CD4-positive, alpha-beta memory T cell (primary cell): ENCODE measurements at regions of chr14 and their contacts with region 1.

Region 1: GRCh38 chr14:64636208-64636979 is 67.8 kb upstream of the PLEKHG3 start:
- DNase-seq: peak; percentile 55 to 73 (median 63)
- H3K4me3 ChIP-seq: no peak overlapping the region
- H3K4me3 Mint-ChIP-seq: no peak overlapping the region
- H3K27ac ChIP-seq: no peak overlapping the region
- H3K27ac Mint-ChIP-seq: peak overlapping the region in 2 of 7 donors; percentile 8 to 17
- H3K4me1 ChIP-seq: no peaks in the 10 kb centered on the region
- H3K4me1 Mint-ChIP-seq: peaks cover 0 to 5% (median 4%) of the 10 kb centered on the region in 4 donors
- H3K27me3 ChIP-seq: no peaks in the 10 kb centered on the region
- H3K27me3 Mint-ChIP-seq: peaks cover 1 to 5% of the 10 kb centered on the region in 2 donors

Region 2: DNA sequence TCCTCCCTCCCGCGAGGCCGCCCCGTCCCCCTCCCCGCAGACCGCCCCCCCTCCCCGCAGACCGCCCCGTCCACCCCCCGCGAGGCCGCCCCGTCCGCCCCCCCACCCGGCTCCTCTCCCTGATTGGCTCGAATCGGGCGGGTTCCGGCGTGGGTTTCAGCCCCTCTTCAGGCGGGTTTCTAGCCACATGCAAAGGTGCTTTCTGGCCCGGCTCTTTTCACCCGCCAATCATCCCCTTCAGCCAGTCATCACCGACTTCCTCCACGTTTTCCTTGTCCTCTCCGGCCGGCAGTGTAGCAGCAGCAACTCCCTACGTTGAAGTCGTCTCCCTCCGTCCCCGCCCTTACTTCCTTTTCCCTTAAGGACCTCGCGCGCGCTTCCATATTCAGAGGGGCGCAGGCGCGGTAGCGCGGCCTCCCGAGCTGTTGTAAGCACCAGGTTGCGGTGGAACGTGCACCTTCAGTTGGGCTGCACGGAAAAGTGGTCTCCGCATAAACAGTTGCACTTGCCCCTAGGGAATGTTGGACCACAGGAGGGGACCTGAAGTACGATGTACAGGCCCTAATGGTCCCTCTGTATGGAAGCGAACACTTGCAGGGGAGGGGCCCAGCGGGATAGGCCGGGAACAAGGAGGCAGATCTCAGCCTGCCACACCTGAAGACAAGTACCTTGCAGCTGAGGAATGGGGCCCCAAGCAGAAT is 297.6 kb before region 1 on chr14:
- CTCF ChIA-PET with region 1: interaction called, 33 read pairs
- POLR2A ChIA-PET with region 1: interaction called, 3 read pairs
- intact Hi-C with region 1: no loop called
- DNase-seq: peak; percentile 84 to 91 (median 85)
- H3K4me3 ChIP-seq: peak overlapping the region; percentile 36 to 77
- H3K4me3 Mint-ChIP-seq: peak overlapping the region; percentile 93 to 99 (median 95)
- H3K27ac ChIP-seq: peak overlapping the region; percentile 34
- H3K27ac Mint-ChIP-seq: peak overlapping the region; percentile 83 to 97 (median 95)
- H3K4me1 ChIP-seq: peaks cover 17% of the 10 kb centered on the region
- H3K4me1 Mint-ChIP-seq: peaks cover 12 to 27% (median 21%) of the 10 kb centered on the region in 4 donors
- H3K27me3 ChIP-seq: no peaks in the 10 kb centered on the region
- H3K27me3 Mint-ChIP-seq: no peaks in the 10 kb centered on the region

Region 3: DNA sequence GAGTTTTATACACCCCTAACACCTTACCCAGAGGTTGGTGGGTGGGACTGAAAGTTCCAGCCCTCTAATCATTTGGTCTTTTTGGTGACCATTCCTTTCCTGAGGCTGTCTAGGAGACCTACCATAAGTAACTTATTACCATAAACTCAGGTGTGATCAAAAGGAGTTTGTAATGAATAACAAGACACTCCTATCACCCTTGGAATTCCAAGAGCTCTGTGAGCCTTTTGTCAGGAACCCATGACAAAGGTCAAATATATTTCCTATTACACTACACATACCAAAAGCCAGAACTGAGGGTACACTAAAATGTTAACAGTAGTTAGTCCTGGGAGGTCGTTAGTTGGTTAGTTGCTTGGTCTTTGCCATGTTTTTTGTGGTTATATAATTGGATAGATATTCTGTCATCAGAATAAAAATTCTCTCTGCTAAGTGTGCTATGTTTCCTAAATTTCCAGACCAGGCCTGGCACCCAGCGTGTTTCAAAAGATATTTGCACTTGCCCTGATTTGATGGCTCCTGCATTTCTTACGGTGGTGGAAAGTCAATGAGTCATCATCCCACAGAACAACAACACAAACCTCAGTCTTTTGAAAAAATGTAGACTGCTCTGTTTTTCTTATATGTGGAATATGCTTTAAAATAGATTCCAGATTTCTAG is 198.1 kb before region 1 on chr14:
- CTCF ChIA-PET with region 1: interaction called, 46 read pairs
- POLR2A ChIA-PET with region 1: no interaction called
- intact Hi-C with region 1: no loop called
- DNase-seq: no peak
- H3K4me3 ChIP-seq: no peak overlapping the region
- H3K4me3 Mint-ChIP-seq: no peak overlapping the region
- H3K27ac ChIP-seq: no peak overlapping the region
- H3K27ac Mint-ChIP-seq: peak overlapping the region in 1 of 7 donors; percentile 50
- H3K4me1 ChIP-seq: no peaks in the 10 kb centered on the region
- H3K4me1 Mint-ChIP-seq: peaks cover 7 to 14% (median 12%) of the 10 kb centered on the region in 4 donors
- H3K27me3 ChIP-seq: no peaks in the 10 kb centered on the region
- H3K27me3 Mint-ChIP-seq: no peaks in the 10 kb centered on the region

Region 4: GRCh38 chr14:64540208-64541157 is 95.9 kb before region 1 on chr14 and contains the start of gene HSPA2:
- CTCF ChIA-PET with region 1: interaction called, 40 read pairs
- POLR2A ChIA-PET with region 1: interaction called, 5 read pairs
- intact Hi-C with region 1: loop called (anchors 1 kb)
- DNase-seq: peak; percentile 92 to 94 (median 94)
- H3K4me3 ChIP-seq: peak within 1 kb of the TSS; percentile 65 to 86
- H3K4me3 Mint-ChIP-seq: peak within 1 kb of the TSS; percentile 92 to 99 (median 96)
- H3K27ac ChIP-seq: peak within 1 kb of the TSS; percentile 43
- H3K27ac Mint-ChIP-seq: peak within 1 kb of the TSS; percentile 86 to 98 (median 90)
- H3K4me1 ChIP-seq: peaks cover 24% of the 10 kb centered on the region
- H3K4me1 Mint-ChIP-seq: peaks cover 12 to 39% (median 29%) of the 10 kb centered on the region in 4 donors
- H3K27me3 ChIP-seq: no peaks in the 10 kb centered on the region
- H3K27me3 Mint-ChIP-seq: peaks cover 0 to 3% of the 10 kb centered on the region in 2 donors
- total RNA-seq, gene HSPA2: 1.3 to 1.5 TPM

Region 5: DNA sequence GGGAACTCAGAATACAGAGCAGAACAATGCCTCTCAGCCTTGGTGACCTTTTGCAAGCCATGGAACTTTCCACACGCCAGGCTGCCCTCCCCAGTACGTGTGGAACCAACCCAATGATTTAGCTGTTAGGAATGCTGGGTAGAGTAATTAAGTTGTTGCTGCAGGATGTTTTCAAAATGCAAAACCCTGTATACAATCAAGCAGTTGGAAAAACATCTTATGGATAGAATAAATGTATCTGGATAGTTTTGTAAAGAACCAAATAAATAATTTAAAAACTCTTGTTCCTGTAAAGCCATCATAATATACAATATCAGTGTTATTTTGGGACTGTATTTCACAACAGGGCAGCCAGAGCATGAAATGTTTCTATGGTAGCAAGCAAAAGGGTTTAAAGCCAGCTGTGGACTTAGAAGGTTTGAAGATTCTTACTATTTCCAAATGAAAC is 67.2 kb before region 1 on chr14:
- CTCF ChIA-PET with region 1: no interaction called
- POLR2A ChIA-PET with region 1: no interaction called
- intact Hi-C with region 1: no loop called
- DNase-seq: no peak
- H3K4me3 ChIP-seq: no peak overlapping the region
- H3K4me3 Mint-ChIP-seq: no peak overlapping the region
- H3K27ac ChIP-seq: no peak overlapping the region
- H3K27ac Mint-ChIP-seq: no peak overlapping the region
- H3K4me1 ChIP-seq: no peaks in the 10 kb centered on the region
- H3K4me1 Mint-ChIP-seq: no peaks in the 10 kb centered on the region
- H3K27me3 ChIP-seq: no peaks in the 10 kb centered on the region
- H3K27me3 Mint-ChIP-seq: peaks cover 0 to 3% of the 10 kb centered on the region in 2 donors

Region 6: GRCh38 chr14:64625475-64626269 is 10.7 kb before region 1 on chr14:
- CTCF ChIA-PET with region 1: interaction called, 14 read pairs
- POLR2A ChIA-PET with region 1: no interaction called
- intact Hi-C with region 1: no loop called
- DNase-seq: no peak
- H3K4me3 ChIP-seq: no peak overlapping the region
- H3K4me3 Mint-ChIP-seq: peak overlapping the region in 1 of 8 donors; percentile 28
- H3K27ac ChIP-seq: no peak overlapping the region
- H3K27ac Mint-ChIP-seq: no peak overlapping the region
- H3K4me1 ChIP-seq: no peaks in the 10 kb centered on the region
- H3K4me1 Mint-ChIP-seq: peaks cover 0 to 5% (median 2%) of the 10 kb centered on the region in 4 donors
- H3K27me3 ChIP-seq: no peaks in the 10 kb centered on the region
- H3K27me3 Mint-ChIP-seq: peaks cover 2 to 8% of the 10 kb centered on the region in 2 donors